Astrocyte of the cerebellum (primary cell): ENCODE measurements at regions of chr2 and their contacts with region 1.

Region 1: GRCh38 chr2:99725820-99726219 is 236.0 kb upstream of the REV1 start:
- DNase-seq: no peak
- H3K4me3 ChIP-seq: no peak overlapping the region
- CTCF ChIP-seq: peak; percentile 24

Region 2: DNA sequence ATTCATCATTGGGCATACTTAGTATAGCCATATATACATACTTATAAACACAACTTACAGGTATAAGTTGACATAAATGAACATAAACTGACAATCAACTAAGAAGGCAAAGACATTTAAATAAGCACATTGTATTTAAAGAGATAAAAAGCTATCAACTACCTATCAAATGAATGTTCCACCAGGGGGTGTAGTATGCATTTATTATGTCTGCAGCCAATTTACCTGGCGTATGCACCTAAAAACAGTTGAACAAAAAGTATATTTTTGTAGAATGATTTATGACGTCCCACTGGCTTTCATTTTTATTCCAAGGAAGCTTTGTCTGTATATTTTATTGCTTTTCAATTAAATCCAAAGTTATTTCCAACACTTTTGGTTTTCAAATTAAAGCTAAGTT is 93.0 kb after region 1 on chr2:
- in situ Hi-C with region 1: loop called (anchors 5 kb)
- DNase-seq: no peak
- H3K4me3 ChIP-seq: no peak overlapping the region
- CTCF ChIP-seq: peak; percentile 16